ENCODE measurements at regions of chr1 and their contacts with region 1.

Region 1: DNA sequence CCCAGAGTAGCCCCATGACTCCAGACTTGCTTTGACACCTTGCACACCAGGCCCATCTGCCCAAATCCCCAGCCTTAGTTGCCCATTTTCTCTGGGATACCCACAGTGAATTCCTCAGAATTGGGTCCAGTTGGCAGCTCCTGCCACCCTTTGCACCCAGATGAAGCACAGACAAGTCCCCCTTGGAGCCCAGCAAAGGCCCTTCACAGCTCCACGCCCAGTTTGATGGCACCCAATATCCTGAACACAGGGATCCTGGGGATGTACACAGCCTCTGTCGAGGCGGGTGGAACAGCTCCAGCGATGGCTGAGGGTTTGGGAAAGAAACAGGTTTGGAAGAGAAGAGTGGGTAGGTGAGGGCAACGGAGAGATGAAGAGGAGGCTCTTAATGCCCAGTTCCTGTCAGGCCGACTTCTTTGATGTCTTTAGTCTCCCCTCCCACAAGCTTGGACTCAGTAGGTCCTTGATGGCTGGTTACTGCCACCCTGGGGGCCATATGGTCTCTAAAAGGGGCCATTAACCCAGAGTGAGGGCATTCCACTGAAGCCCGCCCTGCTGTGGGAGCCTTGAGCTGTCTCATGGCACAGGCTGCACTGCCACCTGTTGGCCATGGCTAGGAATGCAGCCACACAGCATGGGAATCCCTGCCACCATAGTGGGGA is 21.7 kb downstream of the TMEM53 start:
- DNase-seq: peak; percentile 80 to 93
- ATAC-seq: peak; percentile 92
- H3K4me3 ChIP-seq: no peak overlapping the region
- H3K27ac ChIP-seq: no peak overlapping the region
- H3K4me1 ChIP-seq: no peaks in the 10 kb centered on the region
- H3K27me3 ChIP-seq: no peaks in the 10 kb centered on the region

Region 2: DNA sequence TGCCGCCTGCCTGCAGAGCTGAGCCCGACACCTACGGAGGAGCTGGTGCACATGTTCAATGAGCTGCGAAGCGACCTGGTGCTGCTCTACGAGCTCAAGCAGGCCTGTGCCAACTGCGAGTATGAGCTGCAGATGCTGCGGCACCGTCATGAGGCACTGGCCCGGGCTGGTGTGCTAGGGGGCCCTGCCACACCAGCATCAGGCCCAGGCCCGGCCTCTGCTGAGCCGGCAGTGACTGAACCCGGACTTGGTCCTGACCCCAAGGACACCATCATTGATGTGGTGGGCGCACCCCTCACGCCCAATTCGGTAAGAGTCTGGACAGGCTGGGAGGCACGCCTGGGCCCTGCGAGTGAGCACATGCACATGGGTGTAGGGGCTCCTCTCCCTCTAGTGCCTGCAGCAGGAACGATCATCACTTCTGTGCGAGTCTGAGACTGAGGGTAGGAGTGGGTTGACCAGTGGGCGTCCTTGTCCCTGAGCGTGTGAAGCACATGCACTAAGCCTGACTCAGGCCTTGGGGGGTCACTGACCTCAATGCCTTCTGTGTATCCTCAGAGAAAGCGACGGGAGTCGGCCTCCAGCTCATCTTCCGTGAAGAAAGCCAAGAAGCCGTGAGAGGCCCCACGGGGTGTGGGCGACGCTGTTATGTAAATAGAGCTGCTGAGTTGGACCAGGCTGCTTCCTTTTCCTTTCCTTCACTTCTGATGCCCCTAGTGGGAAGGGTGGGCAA is 432.4 kb before region 1 on chr1:
- intact Hi-C with region 1: loop called in 1 of 2 experiments (anchors 10 kb)
- DNase-seq: no peak
- ATAC-seq: no peak
- H3K4me3 ChIP-seq: no peak overlapping the region
- H3K27ac ChIP-seq: no peak overlapping the region
- H3K4me1 ChIP-seq: no peaks in the 10 kb centered on the region
- H3K27me3 ChIP-seq: no peaks in the 10 kb centered on the region

Region 3: DNA sequence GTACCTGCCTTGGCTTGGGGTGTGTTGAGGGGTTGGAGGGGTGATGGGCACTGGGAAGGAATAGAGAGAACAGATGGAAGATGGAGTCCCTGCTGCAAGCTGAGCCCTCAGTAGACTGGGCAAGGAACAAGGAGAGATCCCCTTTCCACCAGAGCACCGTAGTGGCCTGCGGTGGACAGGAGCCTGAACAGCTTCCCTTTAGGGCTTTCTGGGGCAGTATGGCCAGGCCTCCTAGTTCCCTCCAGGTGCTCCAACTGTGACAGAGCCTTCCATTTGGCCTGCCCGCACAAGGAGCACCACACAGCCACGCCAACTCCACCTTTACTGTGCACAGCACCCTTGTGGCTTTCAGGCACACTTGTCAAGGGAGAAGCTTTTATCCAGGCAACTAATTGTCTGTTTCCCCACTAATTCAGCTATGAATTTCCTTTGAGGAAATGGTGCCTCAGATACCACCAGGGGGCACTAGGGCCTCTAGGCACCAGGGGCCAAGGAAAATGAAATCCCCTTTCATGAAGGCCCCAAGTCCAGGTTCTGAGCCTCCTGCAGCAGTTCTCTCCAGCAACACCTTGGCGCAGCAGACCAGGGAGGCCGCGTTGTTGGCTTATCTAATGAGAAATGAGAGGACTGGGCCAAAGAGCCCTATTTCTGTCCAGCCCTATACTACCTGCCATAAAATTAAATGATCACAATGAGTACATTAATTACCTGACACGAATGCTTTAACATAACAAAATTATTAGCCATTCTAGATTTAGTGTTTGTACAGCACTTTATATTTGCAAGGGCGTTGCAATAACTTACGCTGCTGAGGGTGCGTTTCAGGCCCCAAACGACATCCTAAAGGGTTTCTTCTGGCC is 274.4 kb before region 1 on chr1:
- intact Hi-C with region 1: loop called in 1 of 2 experiments (anchors 10 kb)
- DNase-seq: peak in 1 of 2 donors; percentile 59
- ATAC-seq: no peak
- H3K4me3 ChIP-seq: no peak overlapping the region
- H3K27ac ChIP-seq: no peak overlapping the region
- H3K4me1 ChIP-seq: no peaks in the 10 kb centered on the region
- H3K27me3 ChIP-seq: no peaks in the 10 kb centered on the region

Region 4: DNA sequence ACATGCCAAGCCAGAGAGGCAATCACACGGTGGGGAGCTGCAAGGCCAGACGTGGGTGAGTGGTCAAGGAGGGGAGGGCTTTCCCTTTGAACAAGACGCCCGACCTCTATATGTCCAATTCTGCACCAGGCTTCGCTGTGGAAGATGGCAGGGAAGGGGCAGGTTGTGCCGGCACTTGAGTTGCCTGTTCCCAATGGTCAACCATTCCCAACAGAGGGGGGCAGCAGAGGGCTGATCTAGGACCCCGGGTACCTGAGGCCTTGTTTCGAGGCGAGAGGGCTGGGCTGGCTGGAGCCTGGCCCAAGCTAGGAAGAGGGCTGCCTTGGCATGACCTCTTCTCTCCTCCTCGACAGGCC is 43.2 kb before region 1 on chr1:
- intact Hi-C with region 1: loop called (anchors 1 kb)
- DNase-seq: peak; percentile 63 to 85
- ATAC-seq: peak; percentile 71
- H3K4me3 ChIP-seq: no peak overlapping the region
- H3K27ac ChIP-seq: no peak overlapping the region
- H3K4me1 ChIP-seq: no peaks in the 10 kb centered on the region
- H3K27me3 ChIP-seq: no peaks in the 10 kb centered on the region